ENCODE measurements at regions of chr2 and their contacts with region 1.

Region 1: DNA sequence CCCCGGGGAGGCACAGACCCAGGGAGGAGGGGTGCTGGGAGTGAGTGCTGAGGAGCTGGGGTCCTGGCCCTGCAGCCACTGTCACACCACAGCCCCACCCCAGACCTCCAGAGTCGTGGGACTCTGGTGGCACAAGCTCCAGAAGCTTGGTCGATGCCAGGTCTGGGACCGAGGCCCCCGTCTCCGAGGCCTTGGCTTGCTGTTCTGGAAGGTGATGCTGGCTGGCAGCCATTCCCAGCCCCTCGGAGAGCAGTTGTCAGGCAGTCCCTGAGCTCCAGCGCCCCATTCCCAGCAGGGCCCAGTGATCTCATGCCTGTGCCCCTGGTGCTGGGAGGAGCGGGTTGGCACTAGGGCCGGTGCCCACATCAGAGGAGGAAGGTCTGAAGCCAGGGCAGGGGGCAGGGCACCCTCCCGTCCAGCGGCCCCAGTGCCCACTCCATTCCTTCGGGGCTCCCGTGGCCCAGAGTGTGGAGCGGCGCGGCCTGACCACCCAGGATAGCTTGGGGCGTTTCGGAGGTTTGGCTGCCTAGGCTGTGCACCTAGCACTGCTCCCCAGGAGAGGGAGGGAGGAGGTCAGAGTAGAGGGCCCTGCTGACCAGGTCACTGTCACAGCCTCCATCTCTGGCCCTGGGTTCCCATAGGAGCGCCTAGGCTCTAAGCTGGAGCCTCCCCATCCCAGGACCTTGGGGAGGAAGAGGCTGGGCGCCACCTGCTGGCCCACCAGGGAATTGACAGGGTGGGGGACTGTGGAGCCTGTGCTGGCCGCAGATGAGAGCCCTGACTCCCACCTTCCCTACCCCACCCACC is 16.8 kb upstream of the ALPI start:
- DNase-seq: no peak
- H3K4me3 ChIP-seq: no peak overlapping the region
- H3K27me3 ChIP-seq: peaks cover 1% of the 10 kb centered on the region; the same call in 1 of the 2 replicates
- CTCF ChIP-seq: peak; percentile 49; the same call in 1 of the 2 replicates

Region 2: GRCh38 chr2:232085179-232085578 is 354.0 kb before region 1 on chr2:
- CTCF ChIA-PET with region 1: no interaction called
- POLR2A ChIA-PET with region 1: no interaction called
- DNase-seq: no peak
- H3K4me3 ChIP-seq: no peak overlapping the region
- H3K27me3 ChIP-seq: no peaks in the 10 kb centered on the region
- CTCF ChIP-seq: no peak

Region 3: GRCh38 chr2:232336241-232337025 is 102.7 kb before region 1 on chr2:
- CTCF ChIA-PET with region 1: interaction called, 14 read pairs
- POLR2A ChIA-PET with region 1: no interaction called
- DNase-seq: no peak
- H3K4me3 ChIP-seq: no peak overlapping the region
- H3K27me3 ChIP-seq: no peaks in the 10 kb centered on the region
- CTCF ChIP-seq: no peak

Measured in BJ (cell line).